ENCODE measurements at regions of chr6 and their contacts with region 1.

Region 1: GRCh38 chr6:79869600-79870084 is 77.7 kb downstream of the ELOVL4 start:
- DNase-seq: peak; percentile 87 to 90 (median 89)
- ATAC-seq: peak; percentile 97
- H3K4me3 ChIP-seq: no peak overlapping the region
- H3K27ac ChIP-seq: peak overlapping the region in 3 of 4 donors; percentile 24 to 76 (median 57)
- H3K4me1 ChIP-seq: peaks cover 48% of the 10 kb centered on the region
- H3K27me3 ChIP-seq: no peaks in the 10 kb centered on the region
- CTCF ChIP-seq: peak; percentile 86 to 96 (median 91)
- POLR2A ChIP-seq: no peak

Region 2: DNA sequence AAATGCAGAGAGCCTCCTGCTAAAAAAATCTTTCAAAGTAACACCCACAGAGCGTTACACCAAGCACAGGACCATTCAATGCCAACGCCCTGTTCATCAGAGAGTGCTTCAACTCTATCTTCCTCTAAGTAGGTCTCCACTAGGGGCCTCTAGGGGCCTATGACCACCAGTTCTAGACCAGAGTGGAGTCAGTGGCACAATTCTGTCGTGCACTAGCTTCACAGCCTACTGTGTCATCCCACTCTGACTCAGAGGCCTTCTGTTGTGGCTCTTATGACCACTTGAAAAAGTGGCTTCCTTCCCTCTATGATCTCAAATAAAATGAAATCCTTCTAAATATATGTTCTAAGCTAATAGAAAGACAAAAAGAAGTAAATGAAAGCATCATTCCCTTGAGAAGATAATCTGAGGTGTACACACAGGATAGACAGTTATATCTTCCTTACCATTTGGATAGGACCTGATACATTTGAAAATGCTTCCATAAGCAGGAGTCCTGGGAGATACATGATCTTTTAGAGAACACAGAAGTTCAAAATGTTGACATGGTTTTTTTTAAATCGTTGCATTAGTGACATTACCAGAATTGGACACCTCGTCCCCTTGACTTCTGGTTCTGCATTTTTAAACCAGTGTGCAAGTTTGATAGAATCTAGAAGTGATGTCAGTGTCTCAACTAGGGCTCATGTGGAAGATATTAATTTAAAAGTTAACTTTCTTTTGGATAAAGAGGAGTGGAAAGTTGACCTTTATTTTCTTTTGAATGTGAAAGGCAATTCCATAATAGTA is 86.7 kb before region 1 on chr6:
- intact Hi-C with region 1: loop called (anchors 5 kb)
- DNase-seq: no peak
- ATAC-seq: no peak
- H3K4me3 ChIP-seq: no peak overlapping the region
- H3K27ac ChIP-seq: no peak overlapping the region
- H3K4me1 ChIP-seq: peaks cover 11% of the 10 kb centered on the region
- H3K27me3 ChIP-seq: no peaks in the 10 kb centered on the region
- CTCF ChIP-seq: no peak
- POLR2A ChIP-seq: no peak

Measured in body of pancreas (tissue), 4 donors.